T-cell (primary cell): ENCODE measurements at regions of chr2 and their contacts with region 1.

Region 1: DNA sequence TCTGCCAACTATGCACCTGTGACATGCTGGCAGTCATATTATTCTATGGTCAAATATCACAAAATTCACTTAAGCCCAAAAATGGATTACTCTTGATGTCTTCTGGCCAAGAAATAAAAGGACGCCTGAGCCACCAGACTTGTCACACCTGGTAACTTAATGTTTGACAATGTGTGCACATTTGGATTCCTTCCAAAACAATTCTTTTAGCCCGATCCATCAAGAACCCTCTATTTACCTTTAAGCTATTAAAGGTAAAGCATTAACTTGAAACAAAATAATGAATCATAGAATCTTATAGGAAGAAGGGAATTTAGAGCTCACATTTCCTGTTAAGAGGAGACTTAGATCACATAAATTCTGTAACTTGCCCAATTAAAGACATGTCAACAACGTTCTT is 46.5 kb upstream of the NFU1 start:
- DNase-seq: no peak
- ATAC-seq: no peak
- H3K4me3 ChIP-seq: no peak overlapping the region
- H3K4me3 Mint-ChIP-seq: no peak overlapping the region
- H3K27ac ChIP-seq: no peak overlapping the region
- H3K27ac Mint-ChIP-seq: peak overlapping the region; percentile 39 to 67
- H3K4me1 ChIP-seq: no peaks in the 10 kb centered on the region
- H3K4me1 Mint-ChIP-seq: peaks cover 4 to 31% (median 24%) of the 10 kb centered on the region in 3 donors
- H3K27me3 ChIP-seq: no peaks in the 10 kb centered on the region
- H3K27me3 Mint-ChIP-seq: no peaks in the 10 kb centered on the region

Region 2: GRCh38 chr2:69455739-69456138 is 28.0 kb before region 1 on chr2:
- CTCF ChIA-PET with region 1: interaction called in 1 of 2 experiments, 12 read pairs
- POLR2A ChIA-PET with region 1: no interaction called
- DNase-seq: no peak
- ATAC-seq: no peak
- H3K4me3 ChIP-seq: no peak overlapping the region
- H3K4me3 Mint-ChIP-seq: no peak overlapping the region
- H3K27ac ChIP-seq: no peak overlapping the region
- H3K27ac Mint-ChIP-seq: no peak overlapping the region
- H3K4me1 ChIP-seq: no peaks in the 10 kb centered on the region
- H3K4me1 Mint-ChIP-seq: peaks cover 6 to 21% (median 18%) of the 10 kb centered on the region in 3 donors
- H3K27me3 ChIP-seq: no peaks in the 10 kb centered on the region
- H3K27me3 Mint-ChIP-seq: no peaks in the 10 kb centered on the region